ENCODE measurements at regions of chr4 and their contacts with region 1.

Region 1: DNA sequence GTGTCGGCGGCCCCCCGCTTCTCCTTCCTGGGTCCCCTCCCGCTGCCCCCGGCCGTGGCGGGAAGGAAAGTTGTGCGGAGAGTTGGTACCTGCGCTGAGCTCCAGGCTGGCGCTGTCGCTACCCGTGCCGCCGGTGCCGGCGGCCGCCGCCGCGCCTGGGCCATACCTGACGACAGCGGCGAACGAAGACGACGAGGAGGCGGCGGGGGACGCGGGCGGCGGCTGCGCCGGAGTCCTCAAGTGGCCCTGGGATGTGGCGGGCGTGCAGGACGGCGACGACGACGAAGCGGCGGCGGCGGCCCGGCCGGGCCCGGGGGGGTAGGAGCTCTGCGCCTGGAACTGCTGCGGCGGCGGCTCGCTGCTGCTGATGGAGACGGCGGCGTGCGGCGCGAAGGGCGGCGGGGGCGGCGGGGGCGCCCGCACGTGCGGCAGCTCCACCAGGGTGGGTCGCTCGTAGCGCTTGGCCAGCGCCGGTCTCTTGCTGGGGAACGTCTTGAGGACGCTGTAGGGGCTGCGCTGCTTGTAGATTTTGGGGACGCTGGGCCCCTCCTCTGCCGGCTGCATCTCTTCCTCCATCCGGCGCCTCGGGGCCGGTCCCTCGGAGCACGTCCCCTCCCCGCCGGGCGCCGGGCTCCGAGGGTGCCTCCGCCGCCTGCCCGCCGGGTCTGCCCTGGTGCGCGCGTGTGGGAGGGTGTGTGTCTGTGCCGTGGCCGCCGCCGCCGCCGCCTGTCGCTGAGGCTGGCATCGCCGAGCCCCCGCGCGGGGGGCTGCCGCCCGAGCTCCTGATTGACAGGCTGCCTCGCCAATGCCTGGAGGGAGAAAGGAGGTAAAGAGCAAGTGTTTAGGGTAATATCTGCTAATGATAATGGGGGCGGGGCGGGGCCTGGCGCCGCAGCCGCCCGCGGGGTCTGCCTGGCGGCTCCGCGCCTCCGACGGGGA is 618 bp downstream of the BEND4 start:
- DNase-seq: peak; percentile 73
- ATAC-seq: peak; percentile 77
- H3K4me3 Mint-ChIP-seq: peak overlapping the region; percentile 95
- H3K27ac Mint-ChIP-seq: no peak overlapping the region
- H3K4me1 Mint-ChIP-seq: peaks cover 40% of the 10 kb centered on the region
- H3K27me3 Mint-ChIP-seq: peaks cover 1% of the 10 kb centered on the region
- CTCF ChIP-seq: no peak

Region 2: DNA sequence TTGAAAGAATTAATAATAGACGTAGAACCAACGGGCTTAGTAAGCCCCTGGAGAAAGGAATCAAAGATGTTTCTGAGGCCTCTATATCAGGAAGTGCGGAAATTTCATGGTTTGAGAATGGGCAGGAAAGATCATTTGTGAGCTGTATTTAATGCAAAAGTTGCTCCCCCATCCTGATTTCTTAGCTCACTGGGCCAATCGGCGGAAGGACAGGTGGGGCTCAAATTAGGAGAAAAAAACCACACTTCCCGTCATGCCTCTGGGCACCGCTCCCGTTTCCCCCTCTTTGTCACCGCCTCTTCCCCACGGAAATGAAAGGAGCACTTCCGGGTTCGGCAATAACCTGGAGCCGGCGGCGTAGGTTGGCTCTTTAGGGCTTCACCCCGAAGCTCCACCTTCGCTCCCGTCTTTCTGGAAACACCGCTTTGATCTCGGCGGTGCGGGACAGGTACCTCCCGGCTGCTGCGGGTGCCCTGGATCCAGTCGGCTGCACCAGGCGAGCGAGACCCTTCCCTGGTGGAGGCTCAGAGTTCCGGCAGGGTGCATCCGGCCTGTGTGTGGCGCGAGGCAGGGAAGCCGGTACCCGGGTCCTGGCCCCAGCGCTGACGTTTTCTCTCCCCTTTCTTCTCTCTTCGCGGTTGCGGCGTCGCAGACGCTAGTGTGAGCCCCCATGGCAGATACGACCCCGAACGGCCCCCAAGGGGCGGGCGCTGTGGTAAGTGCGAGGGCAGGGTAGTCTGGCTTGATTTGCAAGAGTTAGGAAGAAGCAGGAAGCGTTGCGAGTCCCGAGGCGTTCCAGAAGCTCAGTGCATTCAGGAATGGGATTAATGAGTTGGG is 216.8 kb before region 1 on chr4 and contains the start of gene TMEM33:
- CTCF ChIA-PET with region 1: no interaction called
- POLR2A ChIA-PET with region 1: interaction called, 6 read pairs
- intact Hi-C with region 1: loop called (anchors 2 kb)
- DNase-seq: peak; percentile 58
- ATAC-seq: peak; percentile 89
- H3K4me3 Mint-ChIP-seq: peak within 1 kb of the TSS; percentile 93
- H3K27ac Mint-ChIP-seq: peak within 1 kb of the TSS; percentile 50
- H3K4me1 Mint-ChIP-seq: peaks cover 31% of the 10 kb centered on the region
- H3K27me3 Mint-ChIP-seq: no peaks in the 10 kb centered on the region
- CTCF ChIP-seq: no peak
- total RNA-seq, gene TMEM33: 34.3 and 40.0 TPM in 2 replicates

Region 3: GRCh38 chr4:41990365-41991111 is 161.3 kb before region 1 on chr4 and contains the start of gene SLC30A9:
- CTCF ChIA-PET with region 1: no interaction called
- POLR2A ChIA-PET with region 1: interaction called, 3 read pairs
- intact Hi-C with region 1: loop called (anchors 1 kb)
- DNase-seq: peak; percentile 82
- ATAC-seq: peak; percentile 95
- H3K4me3 Mint-ChIP-seq: peak within 1 kb of the TSS; percentile 98
- H3K27ac Mint-ChIP-seq: peak within 1 kb of the TSS; percentile 95
- H3K4me1 Mint-ChIP-seq: peaks cover 29% of the 10 kb centered on the region
- H3K27me3 Mint-ChIP-seq: no peaks in the 10 kb centered on the region
- CTCF ChIP-seq: no peak
- total RNA-seq, gene SLC30A9: 29.0 and 33.4 TPM in 2 replicates

Region 4: GRCh38 chr4:42167709-42168108 is 15.9 kb after region 1 on chr4:
- CTCF ChIA-PET with region 1: interaction called, 3 read pairs
- POLR2A ChIA-PET with region 1: interaction called, 3 read pairs
- intact Hi-C with region 1: loop called (anchors 1 kb)
- DNase-seq: no peak
- ATAC-seq: peak; percentile 97
- H3K4me3 Mint-ChIP-seq: no peak overlapping the region
- H3K27ac Mint-ChIP-seq: no peak overlapping the region
- H3K4me1 Mint-ChIP-seq: peaks cover 11% of the 10 kb centered on the region
- H3K27me3 Mint-ChIP-seq: no peaks in the 10 kb centered on the region
- CTCF ChIP-seq: no peak

Region 5: GRCh38 chr4:42282081-42282901 is 130.5 kb after region 1 on chr4:
- CTCF ChIA-PET with region 1: no interaction called
- POLR2A ChIA-PET with region 1: no interaction called
- intact Hi-C with region 1: loop called (anchors 1 kb)
- DNase-seq: no peak
- ATAC-seq: peak; percentile 50
- H3K4me3 Mint-ChIP-seq: peak overlapping the region; percentile 3
- H3K27ac Mint-ChIP-seq: no peak overlapping the region
- H3K4me1 Mint-ChIP-seq: peaks cover 16% of the 10 kb centered on the region
- H3K27me3 Mint-ChIP-seq: peaks cover 15% of the 10 kb centered on the region
- CTCF ChIP-seq: no peak

Region 6: DNA sequence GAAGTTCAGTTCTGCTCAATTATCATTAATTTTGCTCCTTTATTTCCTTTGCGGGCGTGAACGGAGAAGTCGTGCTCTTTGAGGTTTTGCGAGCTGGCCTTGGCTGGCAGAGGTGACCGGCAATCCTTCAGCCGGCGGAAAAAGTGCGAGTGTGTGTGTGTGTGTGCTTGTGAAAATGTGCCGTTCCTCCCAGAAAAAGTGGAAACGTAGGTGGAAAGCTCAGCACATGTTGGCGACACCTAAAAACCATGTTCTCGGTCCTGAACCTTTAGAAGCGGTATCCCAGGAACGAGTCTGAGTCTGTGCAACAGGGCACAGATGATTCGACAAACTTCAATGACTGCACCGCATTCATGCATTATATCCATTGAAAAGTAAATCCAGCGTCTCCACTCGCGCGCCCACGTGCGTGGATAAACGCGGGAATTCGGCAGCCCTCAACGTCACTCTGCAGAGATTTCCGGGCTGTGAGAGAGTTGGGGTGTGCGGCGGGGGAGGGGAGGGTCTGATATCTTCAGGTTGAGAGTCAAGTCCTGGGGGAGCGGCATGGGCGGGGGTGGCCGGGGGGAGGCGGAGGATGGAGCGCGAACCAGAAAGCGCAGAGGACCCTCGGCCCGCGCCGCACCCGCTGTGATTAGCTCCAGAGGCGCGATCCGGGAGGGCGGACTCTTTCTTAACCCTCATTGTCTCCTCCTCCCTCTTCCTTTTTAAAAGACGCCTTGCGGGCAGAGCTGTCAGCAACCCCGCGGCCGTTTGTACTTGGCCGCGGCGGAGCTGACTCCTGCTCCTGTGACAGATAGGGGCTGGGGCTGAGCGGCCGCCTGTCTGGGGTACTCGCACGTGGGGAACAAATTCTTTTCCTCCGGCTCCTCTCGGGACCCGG is 245.2 kb after region 1 on chr4 and contains the start of gene SHISA3:
- CTCF ChIA-PET with region 1: no interaction called
- POLR2A ChIA-PET with region 1: no interaction called
- intact Hi-C with region 1: loop called (anchors 5 kb)
- DNase-seq: no peak
- ATAC-seq: peak; percentile 40
- H3K4me3 Mint-ChIP-seq: peak within 1 kb of the TSS; percentile 89
- H3K27ac Mint-ChIP-seq: no peak within 1 kb of the TSS
- H3K4me1 Mint-ChIP-seq: peaks cover 39% of the 10 kb centered on the region
- H3K27me3 Mint-ChIP-seq: peaks cover 45% of the 10 kb centered on the region
- CTCF ChIP-seq: no peak
- total RNA-seq, gene SHISA3: not detected in 2 replicates

Region 7: GRCh38 chr4:42519803-42520417 is 368.1 kb after region 1 on chr4:
- CTCF ChIA-PET with region 1: no interaction called
- POLR2A ChIA-PET with region 1: no interaction called
- intact Hi-C with region 1: loop called (anchors 10 kb)
- DNase-seq: no peak
- ATAC-seq: peak; percentile 42
- H3K4me3 Mint-ChIP-seq: no peak overlapping the region
- H3K27ac Mint-ChIP-seq: no peak overlapping the region
- H3K4me1 Mint-ChIP-seq: peaks cover 6% of the 10 kb centered on the region
- H3K27me3 Mint-ChIP-seq: no peaks in the 10 kb centered on the region
- CTCF ChIP-seq: peak; percentile 59

Measured in activated B cell treated with CpG ODN at 0.5 μM for 24 hours (primary cell).